ENCODE measurements at regions of chr10 and their contacts with region 1.

Region 1: DNA sequence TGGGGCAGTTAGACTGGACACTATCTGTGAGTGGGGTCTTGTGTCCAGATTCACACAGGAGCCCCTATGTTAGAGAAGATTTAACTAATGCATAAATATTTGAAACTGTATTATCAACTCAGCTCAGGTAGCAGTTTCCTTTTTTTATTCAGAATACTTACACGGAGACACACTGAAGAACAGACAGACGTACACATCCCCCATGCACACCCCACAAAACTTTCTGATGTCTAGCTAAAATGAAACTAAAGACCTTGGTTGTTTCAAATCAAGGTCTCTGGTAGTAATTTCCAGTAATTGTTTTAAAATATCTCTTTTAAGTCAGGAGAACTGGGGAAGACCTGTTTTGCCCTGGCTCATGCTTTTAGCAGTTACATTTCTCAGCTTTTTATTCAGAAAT is 55.7 kb upstream of the PRKCQ start:
- DNase-seq: peak; percentile 38
- H3K4me3 Mint-ChIP-seq: peak overlapping the region; percentile 28
- H3K27ac Mint-ChIP-seq: peak overlapping the region; percentile 82
- H3K4me1 Mint-ChIP-seq: peaks cover 39% of the 10 kb centered on the region
- H3K27me3 Mint-ChIP-seq: no peaks in the 10 kb centered on the region

Region 2: GRCh38 chr10:6563075-6563474 is 72.7 kb before region 1 on chr10:
- CTCF ChIA-PET with region 1: no interaction called
- intact Hi-C with region 1: no loop called
- DNase-seq: peak; percentile 84
- H3K4me3 Mint-ChIP-seq: peak overlapping the region; percentile 61
- H3K27ac Mint-ChIP-seq: peak overlapping the region; percentile 82
- H3K4me1 Mint-ChIP-seq: peaks cover 85% of the 10 kb centered on the region
- H3K27me3 Mint-ChIP-seq: no peaks in the 10 kb centered on the region

Region 3: DNA sequence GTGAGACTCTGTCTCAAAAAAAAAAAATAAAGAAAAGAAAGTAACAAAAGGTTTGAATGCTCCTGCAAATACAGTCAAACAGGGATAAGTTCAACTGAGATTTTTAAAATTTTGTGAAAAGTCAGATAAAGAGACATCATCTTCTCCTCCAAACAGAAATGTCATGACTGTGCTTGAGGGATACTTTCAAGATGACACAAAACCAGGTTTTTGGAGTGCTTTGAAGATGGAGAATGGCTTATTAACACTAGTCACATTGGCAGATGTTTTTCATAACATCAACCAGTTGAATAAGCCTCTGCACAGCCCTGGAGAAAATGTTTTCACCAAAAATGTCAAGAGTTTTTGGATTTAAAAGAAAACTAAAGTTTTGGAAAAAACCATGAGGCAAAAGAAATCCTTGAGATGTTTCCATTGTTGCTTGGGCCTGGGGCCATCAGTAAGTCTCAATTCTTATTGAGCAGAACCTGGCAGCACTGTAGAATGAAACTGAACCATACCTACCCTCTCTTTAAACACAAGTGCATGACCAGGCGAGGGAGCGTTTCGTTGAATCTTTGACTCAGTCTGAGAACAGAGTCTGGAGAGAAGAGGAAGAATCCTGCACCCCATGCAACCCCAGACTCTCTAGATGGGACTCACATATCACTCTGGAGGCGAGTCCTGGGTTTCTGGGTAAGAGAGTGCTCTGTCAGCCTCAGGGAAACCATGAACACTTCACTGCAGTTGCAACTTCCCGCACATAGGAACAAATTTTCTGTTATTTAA is 18.3 kb before region 1 on chr10:
- CTCF ChIA-PET with region 1: no interaction called
- intact Hi-C with region 1: loop called (anchors 1 kb)
- DNase-seq: peak; percentile 57
- H3K4me3 Mint-ChIP-seq: no peak overlapping the region
- H3K27ac Mint-ChIP-seq: peak overlapping the region; percentile 84
- H3K4me1 Mint-ChIP-seq: peaks cover 74% of the 10 kb centered on the region
- H3K27me3 Mint-ChIP-seq: no peaks in the 10 kb centered on the region

Measured in activated naive CD4-positive, alpha-beta T cell treated with anti-CD3 and anti-CD28 coated beads for 36 hours (primary cell).